ENCODE measurements at regions of chr6 and their contacts with region 1.

Region 1: GRCh38 chr6:36053878-36054277 is 26.3 kb downstream of the MAPK14 start:
- DNase-seq: no peak
- H3K4me3 ChIP-seq: no peak overlapping the region
- H3K27me3 ChIP-seq: no peaks in the 10 kb centered on the region
- CTCF ChIP-seq: no peak

Region 2: GRCh38 chr6:36033935-36034334 is 19.9 kb before region 1 on chr6:
- CTCF ChIA-PET with region 1: no interaction called
- POLR2A ChIA-PET with region 1: interaction called, 17 read pairs
- DNase-seq: no peak
- H3K4me3 ChIP-seq: no peak overlapping the region
- H3K27me3 ChIP-seq: no peaks in the 10 kb centered on the region
- CTCF ChIP-seq: no peak